Lower lobe of right lung (tissue), 2 donors: ENCODE measurements at regions of chr11 and their contacts with region 1.

Region 1: GRCh38 chr11:13339195-13340153 is 61.9 kb downstream of the BMAL1 start:
- DNase-seq: no peak
- ATAC-seq: peak; percentile 63 to 66
- H3K4me3 ChIP-seq: no peak overlapping the region
- H3K27ac ChIP-seq: no peak overlapping the region
- H3K4me1 ChIP-seq: peaks cover 40% of the 10 kb centered on the region
- H3K27me3 ChIP-seq: no peaks in the 10 kb centered on the region
- CTCF ChIP-seq: no peak

Region 2: GRCh38 chr11:13207665-13208594 is 131.5 kb before region 1 on chr11:
- intact Hi-C with region 1: loop called (anchors 2 kb)
- DNase-seq: peak; percentile 54
- ATAC-seq: peak; percentile 73 to 84
- H3K4me3 ChIP-seq: peak overlapping the region; percentile 43
- H3K27ac ChIP-seq: peak overlapping the region; percentile 74
- H3K4me1 ChIP-seq: peaks cover 9% of the 10 kb centered on the region
- H3K27me3 ChIP-seq: no peaks in the 10 kb centered on the region
- CTCF ChIP-seq: no peak